ENCODE measurements at regions of chr3 and their contacts with region 1.

Region 1: DNA sequence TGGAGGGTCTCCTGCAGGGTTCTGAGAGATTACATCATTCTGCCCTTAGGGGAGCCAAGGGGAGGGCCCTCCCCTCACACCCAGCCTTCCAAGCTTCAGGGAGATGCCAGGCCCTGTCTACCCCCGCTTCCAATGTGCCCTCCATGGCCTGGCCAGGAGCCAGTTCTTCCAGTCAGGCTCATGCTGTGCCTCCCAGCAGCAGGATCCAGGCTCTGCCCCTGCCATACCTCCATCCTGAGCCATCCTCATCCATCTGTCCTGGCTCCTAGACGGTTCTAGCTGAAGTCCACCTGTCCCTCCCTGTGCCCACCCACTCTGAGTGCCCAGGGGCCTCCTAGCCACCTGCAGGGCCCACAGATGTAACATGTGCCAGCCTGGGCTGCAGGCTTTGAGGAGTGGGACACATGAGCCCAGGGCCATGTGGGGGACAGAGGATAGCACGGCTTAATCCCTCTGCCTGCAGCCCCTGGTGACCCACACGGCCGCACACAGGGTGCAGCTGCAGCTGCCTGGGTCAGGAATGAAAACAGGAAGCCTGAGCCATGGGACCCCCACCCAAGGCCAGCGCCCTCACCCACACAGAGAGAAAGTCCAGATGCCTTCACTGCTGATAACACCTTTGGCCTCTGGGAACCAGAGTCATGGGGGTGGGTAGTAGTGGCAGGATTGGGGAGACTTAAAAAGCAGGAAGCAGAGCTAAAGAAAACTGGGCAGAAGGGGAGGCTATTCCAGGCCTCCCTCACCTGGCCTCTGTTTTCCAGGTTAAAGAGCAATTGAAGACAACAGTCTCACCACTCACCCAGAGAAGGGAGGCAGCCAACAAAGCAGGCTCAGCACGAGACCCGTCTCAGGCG is 11.8 kb downstream of the PLCD1 start:
- DNase-seq: no peak
- H3K4me3 ChIP-seq: no peak overlapping the region
- CTCF ChIP-seq: no peak

Region 2: GRCh38 chr3:37849146-37849923 is 168.3 kb before region 1 on chr3:
- CTCF ChIA-PET with region 1: no interaction called
- POLR2A ChIA-PET with region 1: no interaction called
- DNase-seq: no peak
- H3K4me3 ChIP-seq: no peak overlapping the region
- CTCF ChIP-seq: no peak

Region 3: GRCh38 chr3:37986479-37987314 is 31.0 kb before region 1 on chr3:
- CTCF ChIA-PET with region 1: no interaction called
- POLR2A ChIA-PET with region 1: no interaction called
- DNase-seq: no peak
- H3K4me3 ChIP-seq: no peak overlapping the region
- CTCF ChIP-seq: no peak

Region 4: GRCh38 chr3:38004415-38005076 is 13.1 kb before region 1 on chr3:
- CTCF ChIA-PET with region 1: interaction called, 23 read pairs
- POLR2A ChIA-PET with region 1: interaction called, 3 read pairs
- DNase-seq: no peak
- H3K4me3 ChIP-seq: no peak overlapping the region
- CTCF ChIP-seq: peak; percentile 75